Posterior vena cava (tissue), 2 donors: ENCODE measurements at regions of chr20 and their contacts with region 1.

Region 1: DNA sequence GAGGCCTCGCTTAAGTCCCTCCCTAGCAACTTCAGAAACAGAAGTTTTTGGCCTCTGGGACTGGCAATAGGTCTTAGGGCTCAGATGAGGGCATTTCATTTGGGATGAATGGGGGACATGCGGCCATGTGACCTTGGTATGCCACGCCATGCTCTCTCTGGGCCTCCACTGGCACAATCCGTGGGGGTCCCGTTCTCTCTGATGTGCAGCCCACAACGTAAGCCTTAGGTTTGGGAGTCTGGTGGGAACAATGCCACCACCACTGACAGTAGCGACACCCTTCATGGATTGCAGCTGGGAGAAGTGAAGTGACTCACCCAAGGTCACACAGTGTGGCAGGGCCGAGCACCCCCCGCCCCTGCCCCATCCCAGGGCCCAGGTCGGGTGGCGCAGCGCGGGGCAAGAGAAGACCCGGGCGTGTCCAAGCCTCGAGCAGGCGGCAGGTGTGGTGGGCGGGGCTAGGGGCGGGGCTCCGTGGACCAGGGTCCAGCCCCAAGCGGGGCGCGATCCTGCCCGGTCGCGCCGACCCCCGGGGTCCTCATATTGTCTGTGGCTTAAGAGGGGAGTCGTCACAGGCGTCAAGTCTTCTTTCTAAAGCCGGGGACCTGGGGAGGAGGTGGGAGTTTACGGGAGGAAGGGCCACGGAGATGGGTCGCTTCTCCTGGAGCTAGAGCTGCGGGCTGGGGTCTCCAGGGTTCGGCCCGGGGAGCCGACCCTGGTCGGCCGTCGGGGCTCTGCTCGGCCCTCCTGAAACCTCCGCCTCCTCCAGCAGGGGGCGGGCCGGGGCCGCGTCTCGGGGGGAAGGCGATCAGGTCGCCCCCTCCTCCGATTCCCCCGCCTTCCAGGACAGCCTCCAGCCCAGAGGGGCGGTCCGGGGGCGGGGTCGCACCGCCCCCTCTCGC is 698 bp upstream of the CEBPB start:
- DNase-seq: peak; percentile 98

Region 2: GRCh38 chr20:50286609-50287008 is 96.7 kb after region 1 on chr20:
- intact Hi-C with region 1: loop called in 1 of 2 experiments (anchors 10 kb)
- DNase-seq: no peak

Region 3: DNA sequence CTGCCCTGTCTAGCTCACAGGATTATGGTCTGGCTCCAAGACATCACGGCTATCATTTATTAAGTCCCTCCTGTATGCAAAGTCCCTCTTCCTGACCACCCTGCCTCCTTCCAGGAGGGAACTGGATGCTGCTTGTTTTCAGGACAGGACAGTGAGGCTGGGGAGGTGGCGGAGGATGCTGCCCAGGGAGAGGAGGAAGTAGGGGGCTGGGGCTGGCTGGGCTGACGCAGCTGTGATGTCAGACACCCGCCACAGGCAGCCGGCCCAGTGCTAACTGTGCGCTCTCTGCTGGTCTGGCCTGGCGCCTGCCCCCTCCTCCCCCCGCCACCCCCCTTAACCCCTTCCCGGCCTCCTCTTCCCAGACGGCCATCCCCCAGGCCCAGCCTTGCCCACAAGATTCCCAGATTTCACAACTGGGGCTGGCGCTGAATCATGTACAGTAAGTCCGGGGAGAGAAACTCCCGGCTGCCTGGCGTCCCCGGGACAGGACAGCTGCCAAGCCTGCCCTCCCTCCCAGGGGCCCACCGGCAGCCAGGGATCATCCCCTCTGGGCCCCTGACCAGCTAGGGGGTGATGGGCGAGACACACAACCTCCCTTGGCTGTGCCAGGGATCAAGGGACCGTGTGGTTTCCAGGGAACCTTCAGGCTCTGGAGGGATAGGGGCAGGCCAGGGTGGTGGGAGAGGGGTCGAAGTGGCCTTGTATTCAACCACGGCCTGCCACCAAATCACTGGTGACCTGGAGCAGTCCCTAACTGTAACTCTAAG is 118.8 kb after region 1 on chr20:
- intact Hi-C with region 1: loop called in 1 of 2 experiments (anchors 5 kb)
- DNase-seq: peak; percentile 98

Region 4: GRCh38 chr20:50460460-50461267 is 270.7 kb after region 1 on chr20:
- intact Hi-C with region 1: loop called (anchors 1 to 2 kb)
- DNase-seq: peak; percentile 97

Region 5: GRCh38 chr20:50645253-50646118 is 455.6 kb after region 1 on chr20:
- intact Hi-C with region 1: no loop called
- DNase-seq: peak; percentile 87

Region 6: GRCh38 chr20:50744143-50744792 is 554.3 kb after region 1 on chr20:
- intact Hi-C with region 1: loop called in 1 of 2 experiments (anchors 5 kb)
- DNase-seq: peak; percentile 87

Region 7: DNA sequence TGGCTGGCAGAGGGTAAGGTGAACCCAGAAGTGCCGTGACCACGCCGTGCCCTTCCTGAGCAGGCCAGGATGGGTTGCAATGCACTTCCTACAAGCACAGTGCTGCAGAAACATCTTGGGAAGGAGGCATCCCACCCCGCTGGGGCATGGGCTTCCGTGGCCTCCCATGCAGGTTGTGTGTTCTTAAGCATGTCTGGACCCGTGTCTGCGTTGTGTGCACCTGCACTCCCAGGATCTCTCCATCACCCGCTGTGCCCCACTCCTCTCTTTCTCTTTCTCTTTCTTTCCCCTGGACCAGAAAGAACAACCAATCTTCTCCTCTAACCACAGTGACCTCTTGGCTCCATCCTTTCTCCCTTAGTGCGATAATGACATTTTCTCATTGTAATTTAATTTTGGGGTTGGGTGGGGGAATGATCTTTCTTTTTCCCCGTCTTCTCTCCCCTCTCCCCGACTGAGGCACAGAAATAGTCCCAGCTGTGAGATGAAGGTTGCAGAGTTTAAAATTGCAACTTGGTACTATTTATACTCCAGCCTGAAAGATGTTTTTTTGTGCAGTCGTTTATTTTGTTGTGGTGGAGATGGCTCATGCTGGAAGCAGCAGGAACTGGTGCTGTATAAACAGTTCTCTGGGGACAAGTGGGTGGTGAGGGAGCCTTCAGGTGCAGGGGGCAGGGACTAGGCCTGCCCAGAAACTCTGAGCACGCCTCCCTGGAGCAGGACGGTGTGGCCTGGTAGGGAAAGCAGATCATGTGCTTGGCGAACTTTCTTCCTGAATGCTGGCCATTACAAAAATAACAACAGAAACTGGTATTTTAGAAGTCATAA is 625.4 kb after region 1 on chr20:
- intact Hi-C with region 1: no loop called
- DNase-seq: no peak

Region 8: DNA sequence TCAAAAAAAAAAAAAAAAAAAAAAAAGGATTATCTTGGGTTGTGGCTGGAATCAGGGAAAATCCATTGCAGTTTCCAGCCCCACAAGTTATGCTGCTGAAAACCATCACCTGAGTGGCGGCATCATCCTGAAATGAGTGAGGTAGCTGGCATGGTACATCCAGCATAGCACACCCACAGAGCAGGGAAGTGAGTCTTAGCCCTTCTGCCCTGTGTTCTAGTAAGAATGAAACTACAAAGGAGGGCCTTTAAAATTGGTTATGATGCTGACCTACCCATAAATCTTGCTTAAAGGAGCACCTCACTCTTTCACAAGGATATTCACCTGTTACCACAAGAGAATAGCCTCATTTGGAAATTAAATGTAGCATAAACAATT is 1233.3 kb after region 1 on chr20:
- intact Hi-C with region 1: no loop called
- DNase-seq: no peak